ENCODE measurements at regions of chr9 and their contacts with region 1.

Region 1: GRCh38 chr9:130707225-130707976 is 13.8 kb downstream of the EXOSC2 start:
- DNase-seq: peak; percentile 57
- H3K27ac ChIP-seq: peak overlapping the region; percentile 16
- CTCF ChIP-seq: peak; percentile 95

Region 2: DNA sequence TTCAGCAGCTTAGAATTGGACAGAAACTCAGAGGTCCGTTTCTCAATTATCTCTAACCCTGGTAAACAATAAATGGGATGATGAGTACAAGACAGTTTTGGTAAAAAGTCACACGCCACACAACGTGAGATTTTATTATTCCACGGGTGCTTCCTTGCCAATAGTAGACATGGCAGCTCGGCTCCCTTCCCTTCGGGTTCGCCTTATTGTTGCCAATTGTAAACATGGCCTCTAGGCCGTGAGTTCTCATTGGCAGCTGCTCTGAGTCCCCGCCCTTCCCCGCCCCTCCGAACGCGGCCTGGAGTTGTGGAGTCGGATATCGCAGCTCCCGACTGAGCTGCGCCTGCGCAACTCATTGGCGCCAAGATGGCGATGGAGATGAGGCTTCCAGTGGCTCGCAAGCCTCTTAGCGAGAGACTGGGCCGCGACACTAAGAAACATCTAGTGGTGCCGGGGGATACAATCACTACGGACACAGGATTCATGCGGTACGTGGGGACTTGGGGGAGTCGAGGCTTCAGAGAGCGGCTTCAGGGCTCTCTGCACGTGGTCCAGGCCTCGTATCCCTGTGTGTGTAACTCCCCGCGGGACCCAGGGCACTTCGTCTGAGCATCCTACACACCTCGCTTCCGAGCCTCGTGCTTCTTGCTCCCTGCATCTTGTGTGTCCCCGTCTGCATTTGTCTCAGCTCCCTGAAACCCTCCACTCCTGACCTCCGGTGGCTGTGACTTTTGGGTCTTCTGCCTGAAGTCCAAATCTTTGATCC is 13.8 kb before region 1 on chr9 and contains the start of gene EXOSC2:
- CTCF ChIA-PET with region 1: interaction called, 19 read pairs
- POLR2A ChIA-PET with region 1: no interaction called
- DNase-seq: peak; percentile 99
- H3K27ac ChIP-seq: peak within 1 kb of the TSS; percentile 72
- CTCF ChIP-seq: no peak